ENCODE measurements at regions of chr5 and their contacts with region 1.

Region 1: DNA sequence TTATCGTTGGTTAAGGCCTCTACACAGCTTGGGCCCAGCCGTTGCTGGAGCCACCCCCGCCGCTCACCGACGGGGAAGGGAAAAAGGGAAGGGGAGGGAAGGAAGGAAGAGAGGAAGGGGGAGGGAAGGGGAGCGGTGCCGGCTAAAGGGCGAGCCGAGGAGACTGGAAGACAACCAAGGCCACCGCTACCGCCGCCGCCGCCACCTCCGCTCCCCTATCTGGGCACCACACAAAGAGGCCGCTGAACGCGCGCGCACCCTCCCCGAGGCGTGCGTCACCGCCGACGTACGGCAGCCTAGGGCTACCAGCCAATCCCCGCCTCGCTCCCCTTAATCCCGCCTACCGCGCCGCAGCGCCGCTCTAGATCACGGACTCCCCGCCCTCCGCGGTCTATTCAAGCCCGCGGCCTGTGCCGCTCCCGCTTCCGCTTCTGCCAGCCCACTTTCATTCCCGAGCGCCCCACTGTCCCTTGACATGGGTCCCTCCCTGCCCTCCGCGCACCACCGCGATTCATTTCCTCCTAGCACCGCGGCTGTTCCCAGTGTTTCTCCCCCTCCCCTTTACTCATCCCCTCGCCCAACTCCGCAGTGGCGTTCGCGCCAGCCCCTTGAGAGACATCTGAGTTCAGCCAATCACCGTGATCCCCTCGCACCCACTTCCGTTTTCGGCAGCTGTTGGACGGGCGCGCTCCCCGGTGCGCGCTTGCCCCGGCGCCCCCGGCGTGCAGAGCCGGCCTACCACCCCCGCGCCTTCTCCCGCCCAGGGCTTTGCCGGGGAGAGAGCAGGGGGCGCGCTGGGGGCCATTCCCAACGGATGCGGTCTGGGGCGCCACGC is at the start of gene HNRNPA0:
- DNase-seq: peak; percentile 97
- H3K4me3 Mint-ChIP-seq: peak within 1 kb of the TSS; percentile 93
- H3K27ac Mint-ChIP-seq: peak within 1 kb of the TSS; percentile 100
- H3K4me1 Mint-ChIP-seq: peaks cover 32% of the 10 kb centered on the region
- H3K27me3 Mint-ChIP-seq: peaks cover 3% of the 10 kb centered on the region
- total RNA-seq, gene HNRNPA0: 29.2 to 29.6 TPM

Region 2: DNA sequence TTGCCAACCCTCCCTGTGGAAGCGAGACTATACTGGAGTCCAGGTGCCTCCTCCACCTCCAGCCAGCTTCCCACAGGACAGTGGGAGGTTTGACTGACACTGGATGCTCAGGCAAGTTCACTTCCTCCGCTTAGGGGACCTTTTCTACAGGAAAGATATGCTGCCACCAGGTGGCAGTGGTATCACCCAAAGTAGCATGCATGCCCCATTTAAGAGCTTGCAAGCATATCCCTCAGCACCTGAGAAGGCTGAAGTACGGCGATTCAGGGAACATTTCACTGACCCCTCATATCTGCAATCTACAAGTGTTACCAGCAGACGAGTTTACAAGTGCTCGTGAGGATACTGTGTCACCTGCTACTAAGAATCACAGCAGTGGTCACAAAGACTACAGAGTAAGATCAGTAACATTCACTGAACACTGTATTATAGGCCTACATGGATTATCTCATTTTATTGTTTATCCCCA is 94.0 kb before region 1 on chr5:
- CTCF ChIA-PET with region 1: interaction called, 22 read pairs
- POLR2A ChIA-PET with region 1: interaction called, 3 read pairs
- intact Hi-C with region 1: no loop called
- DNase-seq: peak; percentile 82
- H3K4me3 Mint-ChIP-seq: no peak overlapping the region
- H3K27ac Mint-ChIP-seq: no peak overlapping the region
- H3K4me1 Mint-ChIP-seq: peaks cover 8% of the 10 kb centered on the region
- H3K27me3 Mint-ChIP-seq: no peaks in the 10 kb centered on the region

Region 3: DNA sequence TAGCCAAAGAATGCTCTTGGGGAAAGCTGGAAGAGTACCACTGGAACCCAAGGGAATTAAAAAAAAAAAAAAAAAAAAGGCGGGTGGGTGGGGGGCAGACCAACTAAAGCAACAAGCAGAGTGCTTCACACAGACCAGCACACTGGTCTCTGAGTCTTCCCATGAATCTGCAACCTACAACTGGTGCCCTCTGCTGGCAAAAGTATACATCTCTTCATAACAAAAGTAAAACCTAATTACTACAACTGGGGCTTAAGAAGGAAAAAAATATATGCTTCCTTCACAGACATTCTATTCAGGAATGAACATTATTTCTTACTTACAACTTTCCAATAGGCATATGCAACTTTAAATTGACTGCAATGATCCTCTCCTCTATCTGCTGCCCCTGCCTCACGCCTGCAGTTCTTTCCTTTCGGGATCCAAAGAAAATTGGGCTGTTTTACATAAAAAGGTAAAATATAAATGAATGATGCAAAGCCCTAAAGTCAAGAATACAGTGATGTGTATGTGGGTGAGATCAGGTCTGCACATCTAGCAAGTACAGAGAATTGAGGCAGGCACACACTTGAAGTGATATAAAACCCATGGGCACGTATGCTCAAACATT is 11.2 kb before region 1 on chr5:
- CTCF ChIA-PET with region 1: interaction called, 32 read pairs
- POLR2A ChIA-PET with region 1: interaction called, 7 read pairs
- intact Hi-C with region 1: no loop called
- DNase-seq: peak; percentile 57
- H3K4me3 Mint-ChIP-seq: no peak overlapping the region
- H3K27ac Mint-ChIP-seq: no peak overlapping the region
- H3K4me1 Mint-ChIP-seq: peaks cover 7% of the 10 kb centered on the region
- H3K27me3 Mint-ChIP-seq: no peaks in the 10 kb centered on the region

Region 4: GRCh38 chr5:137933491-137933911 is 179.2 kb after region 1 on chr5:
- CTCF ChIA-PET with region 1: no interaction called
- POLR2A ChIA-PET with region 1: no interaction called
- intact Hi-C with region 1: loop called (anchors 10 kb)
- DNase-seq: no peak
- H3K4me3 Mint-ChIP-seq: no peak overlapping the region
- H3K27ac Mint-ChIP-seq: no peak overlapping the region
- H3K4me1 Mint-ChIP-seq: peaks cover 7% of the 10 kb centered on the region
- H3K27me3 Mint-ChIP-seq: no peaks in the 10 kb centered on the region

Region 5: DNA sequence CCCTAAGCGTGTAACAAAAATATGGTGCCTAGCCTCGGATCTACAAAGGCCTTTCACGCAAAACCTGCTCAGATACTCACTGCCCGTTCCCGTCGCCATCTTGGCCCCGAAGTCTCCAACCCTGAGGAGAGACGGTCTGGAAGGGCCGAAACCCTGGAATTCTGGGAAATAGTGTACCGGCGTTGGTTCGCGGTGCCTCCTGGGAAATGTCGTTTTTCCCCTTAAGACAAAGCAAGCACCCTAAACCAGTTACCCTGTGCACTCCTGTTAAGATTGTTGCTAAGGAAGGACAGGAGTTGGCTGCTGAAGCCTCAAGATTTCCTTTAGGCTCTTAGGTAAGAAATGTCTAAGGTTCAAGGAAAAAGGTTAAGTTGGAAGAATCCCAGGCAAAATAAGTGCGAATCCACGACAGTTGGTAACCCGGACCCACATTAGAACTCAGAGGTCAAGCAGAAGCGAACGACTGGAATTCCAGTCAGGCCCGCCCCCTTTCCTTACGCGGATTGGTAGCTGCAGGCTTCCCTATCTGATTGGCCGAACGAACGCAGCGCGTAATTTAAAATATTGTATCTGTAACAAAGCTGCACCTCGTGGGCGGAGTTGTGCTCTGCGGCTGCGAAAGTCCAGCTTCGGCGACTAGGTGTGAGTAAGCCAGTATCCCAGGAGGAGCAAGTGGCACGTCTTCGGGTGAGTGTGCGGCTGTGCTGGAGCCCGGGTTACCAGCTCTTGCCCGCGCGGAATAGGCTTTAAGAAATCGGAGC is 424.4 kb after region 1 on chr5 and contains the starts of genes BRD8 and KIF20A:
- CTCF ChIA-PET with region 1: no interaction called
- POLR2A ChIA-PET with region 1: no interaction called
- intact Hi-C with region 1: loop called (anchors 1 kb)
- DNase-seq: peak; percentile 96
- H3K4me3 Mint-ChIP-seq: no peak within 1 kb of the TSS
- H3K27ac Mint-ChIP-seq: no peak within 1 kb of the TSS
- H3K4me1 Mint-ChIP-seq: peaks cover 17% of the 10 kb centered on the region
- H3K27me3 Mint-ChIP-seq: no peaks in the 10 kb centered on the region
- total RNA-seq, gene BRD8: 62.9 to 65.8 TPM
- total RNA-seq, gene KIF20A: 55.5 to 60.3 TPM

Region 6: GRCh38 chr5:138542956-138543729 is 788.8 kb after region 1 on chr5 and contains the start of gene ETF1:
- CTCF ChIA-PET with region 1: no interaction called
- POLR2A ChIA-PET with region 1: no interaction called
- intact Hi-C with region 1: loop called (anchors 2 kb)
- DNase-seq: peak; percentile 100
- H3K4me3 Mint-ChIP-seq: peak within 1 kb of the TSS; percentile 98
- H3K27ac Mint-ChIP-seq: peak within 1 kb of the TSS; percentile 100
- H3K4me1 Mint-ChIP-seq: peaks cover 71% of the 10 kb centered on the region
- H3K27me3 Mint-ChIP-seq: no peaks in the 10 kb centered on the region
- total RNA-seq, gene ETF1: 131 to 132 TPM

Measured in activated CD4-positive, alpha-beta memory T cell treated with anti-CD3 and anti-CD28 coated beads for 36 hours (primary cell).